CD8-positive, alpha-beta T cell (primary cell): ENCODE measurements at regions of chr4 and their contacts with region 1.

Region 1: GRCh38 chr4:11919316-11919715 is 490.6 kb upstream of the HS3ST1 start:
- DNase-seq: no peak
- ATAC-seq: no peak
- H3K4me3 ChIP-seq: no peak overlapping the region
- H3K4me3 Mint-ChIP-seq: no peak overlapping the region
- H3K27ac ChIP-seq: no peak overlapping the region
- H3K27ac Mint-ChIP-seq: no peak overlapping the region
- H3K4me1 ChIP-seq: no peaks in the 10 kb centered on the region
- H3K4me1 Mint-ChIP-seq: no peaks in the 10 kb centered on the region
- H3K27me3 ChIP-seq: no peaks in the 10 kb centered on the region
- H3K27me3 Mint-ChIP-seq: no peaks in the 10 kb centered on the region
- CTCF ChIP-seq: no peak

Region 2: GRCh38 chr4:11954093-11954492 is 34.8 kb after region 1 on chr4:
- CTCF ChIA-PET with region 1: no interaction called
- POLR2A ChIA-PET with region 1: no interaction called
- intact Hi-C with region 1: loop called in 1 of 2 experiments (anchors 1 kb)
- DNase-seq: no peak
- ATAC-seq: no peak
- H3K4me3 ChIP-seq: no peak overlapping the region
- H3K4me3 Mint-ChIP-seq: no peak overlapping the region
- H3K27ac ChIP-seq: no peak overlapping the region
- H3K27ac Mint-ChIP-seq: no peak overlapping the region
- H3K4me1 ChIP-seq: no peaks in the 10 kb centered on the region
- H3K4me1 Mint-ChIP-seq: no peaks in the 10 kb centered on the region
- H3K27me3 ChIP-seq: no peaks in the 10 kb centered on the region
- H3K27me3 Mint-ChIP-seq: no peaks in the 10 kb centered on the region
- CTCF ChIP-seq: no peak